Natural killer cell (primary cell): ENCODE measurements at regions of chr9 and their contacts with region 1.

Region 1: GRCh38 chr9:114653556-114654159 is 3.9 kb downstream of the TEX53 start:
- DNase-seq: peak; percentile 70 to 90
- ATAC-seq: peak; percentile 89 to 99 (median 97)
- H3K4me3 ChIP-seq: no peak overlapping the region
- H3K4me3 Mint-ChIP-seq: no peak overlapping the region
- H3K27ac ChIP-seq: no peak overlapping the region
- H3K27ac Mint-ChIP-seq: no peak overlapping the region
- H3K4me1 ChIP-seq: peaks cover 4% of the 10 kb centered on the region
- H3K4me1 Mint-ChIP-seq: peaks cover 6 to 18% of the 10 kb centered on the region in 2 donors
- H3K27me3 ChIP-seq: no peaks in the 10 kb centered on the region
- H3K27me3 Mint-ChIP-seq: peaks cover 0 to 3% of the 10 kb centered on the region in 2 donors
- CTCF ChIP-seq: peak; percentile 81

Region 2: DNA sequence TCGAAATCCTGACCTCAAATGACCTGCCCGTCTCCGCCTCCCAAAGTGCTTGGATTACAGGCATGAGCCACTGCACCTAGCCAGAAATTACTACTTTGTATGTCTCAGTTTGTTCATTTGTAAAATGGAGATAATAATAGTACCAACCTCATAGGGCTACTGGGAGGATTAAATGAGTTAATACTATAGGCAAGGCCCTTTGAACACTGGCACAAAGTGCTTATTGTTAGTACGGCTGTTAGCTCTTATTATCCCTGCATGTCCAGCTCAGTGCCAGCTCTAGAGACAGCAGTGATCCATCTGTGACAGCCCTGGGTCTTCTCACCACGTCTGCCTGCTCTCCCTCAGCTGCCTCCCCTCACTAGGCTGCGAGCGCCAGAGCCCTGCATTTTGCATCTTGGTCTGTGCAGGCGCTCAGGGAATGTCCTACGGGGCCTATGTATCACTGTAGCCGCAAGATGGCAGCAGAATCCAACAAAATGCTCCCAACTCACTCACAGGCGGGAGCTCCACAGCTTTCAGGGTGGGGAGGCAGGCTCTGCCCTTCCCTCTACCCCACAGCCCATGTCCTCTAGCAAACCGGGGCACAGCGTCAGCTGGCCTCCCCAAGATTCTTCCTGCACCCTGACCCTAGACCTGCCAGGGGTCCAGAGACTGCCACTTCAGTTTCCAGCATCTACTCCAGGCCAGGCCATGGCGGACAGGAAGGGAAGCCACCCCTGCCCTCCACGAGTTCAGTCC is 248.2 kb before region 1 on chr9:
- intact Hi-C with region 1: loop called (anchors 1 kb)
- DNase-seq: peak; percentile 71 to 93
- ATAC-seq: peak; percentile 92 to 99 (median 99)
- H3K4me3 ChIP-seq: no peak overlapping the region
- H3K4me3 Mint-ChIP-seq: no peak overlapping the region
- H3K27ac ChIP-seq: no peak overlapping the region
- H3K27ac Mint-ChIP-seq: peak overlapping the region; percentile 23 to 25
- H3K4me1 ChIP-seq: peaks cover 7% of the 10 kb centered on the region
- H3K4me1 Mint-ChIP-seq: peaks cover 6 to 15% of the 10 kb centered on the region in 2 donors
- H3K27me3 ChIP-seq: no peaks in the 10 kb centered on the region
- H3K27me3 Mint-ChIP-seq: no peaks in the 10 kb centered on the region
- CTCF ChIP-seq: peak; percentile 78

Region 3: GRCh38 chr9:114587385-114588202 is 66.1 kb before region 1 on chr9 and contains the start of gene ATP6V1G1:
- intact Hi-C with region 1: loop called (anchors 2 kb)
- DNase-seq: peak; percentile 98 to 99
- ATAC-seq: peak; percentile 95 to 99 (median 96)
- H3K4me3 ChIP-seq: peak within 1 kb of the TSS; percentile 95
- H3K4me3 Mint-ChIP-seq: peak within 1 kb of the TSS; percentile 99
- H3K27ac ChIP-seq: peak within 1 kb of the TSS; percentile 89
- H3K27ac Mint-ChIP-seq: peak within 1 kb of the TSS; percentile 98 to 99
- H3K4me1 ChIP-seq: peaks cover 42% of the 10 kb centered on the region
- H3K4me1 Mint-ChIP-seq: peaks cover 49 to 50% of the 10 kb centered on the region in 2 donors
- H3K27me3 ChIP-seq: no peaks in the 10 kb centered on the region
- H3K27me3 Mint-ChIP-seq: no peaks in the 10 kb centered on the region
- CTCF ChIP-seq: no peak
- total RNA-seq, gene ATP6V1G1: 83.8 to 101 (median 93.5) TPM